ENCODE measurements at regions of chr3 and their contacts with region 1.

Region 1: DNA sequence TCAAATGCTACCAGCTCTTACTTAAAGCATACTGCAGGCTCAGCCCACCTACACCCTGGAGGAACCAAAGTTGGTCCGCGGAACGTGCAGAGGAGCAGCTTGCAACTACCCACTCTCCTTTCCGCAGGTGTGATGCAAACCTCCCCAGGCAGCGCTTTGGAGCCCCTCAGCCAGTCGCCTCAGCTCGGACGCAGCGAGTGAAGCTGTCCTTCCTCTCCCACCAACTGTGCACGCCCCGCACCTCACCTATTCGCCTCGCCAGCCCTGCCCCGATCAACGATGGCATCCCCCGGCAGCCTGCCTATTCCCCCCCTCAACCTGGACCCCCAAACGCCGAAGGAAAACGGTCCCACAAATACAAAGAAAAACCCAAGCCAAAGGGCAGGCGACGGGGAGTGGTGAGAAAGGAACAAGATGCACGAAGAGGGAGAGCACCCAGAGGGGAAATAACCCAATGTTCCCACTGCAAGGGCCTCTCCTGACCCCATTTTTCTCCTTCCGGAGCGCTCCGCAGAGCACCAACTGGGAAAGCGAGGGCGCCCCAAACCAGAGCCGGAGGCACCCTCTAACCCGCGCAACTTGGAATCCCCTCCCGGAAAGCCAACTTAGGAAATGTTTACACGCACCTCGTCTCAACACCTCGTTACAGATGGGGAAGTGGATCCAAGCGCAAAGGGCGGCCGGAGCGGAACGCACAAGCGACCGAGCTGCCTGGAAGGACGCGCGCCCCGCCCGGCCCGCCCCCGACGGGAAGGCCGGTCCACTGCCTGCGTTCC is 665 bp downstream of the GLB1 start:
- DNase-seq: peak; percentile 50 to 80 (median 57)
- ATAC-seq: peak; percentile 38 to 73 (median 56)
- H3K4me3 ChIP-seq: peak overlapping the region; percentile 68 to 100 (median 98)
- H3K27ac ChIP-seq: peak overlapping the region; percentile 82 to 99 (median 96)
- H3K4me1 ChIP-seq: peaks cover 0 to 48% (median 12%) of the 10 kb centered on the region in 12 donors
- H3K27me3 ChIP-seq: no peaks in the 10 kb centered on the region
- CTCF ChIP-seq: no peak
- POLR2A ChIP-seq: no peak

Region 2: GRCh38 chr3:33113772-33114621 is 17.7 kb after region 1 on chr3 and contains the start of gene CRTAP:
- intact Hi-C with region 1: loop called in 5 of 10 experiments (anchors 1 to 2 kb)
- DNase-seq: peak; percentile 95 to 99 (median 98)
- ATAC-seq: peak; percentile 93 to 96 (median 96)
- H3K4me3 ChIP-seq: peak within 1 kb of the TSS; percentile 57 to 98 (median 86)
- H3K27ac ChIP-seq: peak within 1 kb of the TSS; percentile 80 to 99 (median 97)
- H3K4me1 ChIP-seq: peaks cover 0 to 44% (median 21%) of the 10 kb centered on the region in 12 donors
- H3K27me3 ChIP-seq: no peaks in the 10 kb centered on the region
- CTCF ChIP-seq: peak in 4 of 12 donors; percentile 3 to 30 (median 8)
- POLR2A ChIP-seq: peak in 1 of 2 donors; percentile 28
- total RNA-seq, gene CRTAP: 62.6 to 148 (median 92.7) TPM

Measured in heart left ventricle (tissue), 16 donors.